K562 (cell line): ENCODE measurements at regions of chr1 and their contacts with region 1.

Region 1: GRCh38 chr1:41432481-41433280 is 51.8 kb downstream of the EDN2 start:
- DNase-seq: peak; percentile 90 to 97 (median 94)
- ATAC-seq: peak; percentile 100
- H3K4me3 ChIP-seq: no peak overlapping the region
- H3K27ac ChIP-seq: no peak overlapping the region
- H3K4me1 ChIP-seq: peaks cover 7 to 15% of the 10 kb centered on the region in 2 experiments; a peak in 3 of 5 replicates
- H3K27me3 ChIP-seq: peaks cover 16 to 38% of the 10 kb centered on the region in 2 experiments
- CTCF ChIP-seq: peak; percentile 97 to 99 (median 98)
- EP300 ChIP-seq: no peak
- POLR2A ChIP-seq: no peak
- RAD21 ChIP-seq: peak; percentile 94 to 99

Region 2: DNA sequence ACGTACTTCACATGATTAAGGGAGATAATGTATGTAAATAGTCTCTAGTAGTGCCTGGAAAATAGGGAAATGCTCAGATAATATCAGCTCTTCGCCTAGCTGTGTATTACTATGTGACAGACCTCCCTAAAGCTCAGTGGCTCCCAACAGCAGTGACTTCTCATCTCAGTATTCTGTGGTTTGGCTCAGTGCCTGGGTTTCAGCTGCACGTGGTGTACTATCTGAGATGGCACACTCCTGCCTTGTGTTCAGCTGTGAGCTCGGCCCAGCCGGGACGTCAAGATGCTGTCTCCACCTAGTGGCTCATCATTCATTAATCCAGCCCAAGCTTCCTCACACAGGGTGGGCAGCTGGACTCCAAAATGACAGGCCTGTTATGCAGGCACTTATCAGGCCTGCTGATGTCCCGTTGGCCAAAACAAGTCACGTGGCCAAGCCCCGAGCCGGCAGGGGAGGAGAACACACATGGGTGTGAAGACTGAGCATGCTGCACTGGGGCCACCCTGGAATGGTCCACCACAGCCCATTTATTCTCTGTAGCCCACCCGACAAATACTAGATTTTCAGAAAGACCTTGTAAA is 429.0 kb before region 1 on chr1:
- CTCF ChIA-PET with region 1: no interaction called
- POLR2A ChIA-PET with region 1: no interaction called
- in situ Hi-C with region 1: no loop called
- intact Hi-C with region 1: no loop called
- DNase-seq: peak; percentile 89 to 99 (median 93)
- ATAC-seq: peak; percentile 98
- H3K4me3 ChIP-seq: no peak overlapping the region
- H3K27ac ChIP-seq: no peak overlapping the region
- H3K4me1 ChIP-seq: peaks cover 13 to 17% of the 10 kb centered on the region in 2 experiments; a peak in 4 of 5 replicates
- H3K27me3 ChIP-seq: no peaks in the 10 kb centered on the region; a peak in 1 of 5 replicates
- CTCF ChIP-seq: peak; percentile 79 to 92 (median 88)
- EP300 ChIP-seq: peak; percentile 85
- POLR2A ChIP-seq: no peak
- RAD21 ChIP-seq: peak; percentile 70 to 80

Region 3: GRCh38 chr1:41268154-41268770 is 164.4 kb before region 1 on chr1:
- CTCF ChIA-PET with region 1: interaction called, 25 read pairs
- POLR2A ChIA-PET with region 1: no interaction called
- in situ Hi-C with region 1: loop called (anchors 5 kb)
- intact Hi-C with region 1: loop called (anchors 1 kb)
- DNase-seq: peak; percentile 81 to 90 (median 89)
- ATAC-seq: peak; percentile 92
- H3K4me3 ChIP-seq: no peak overlapping the region
- H3K27ac ChIP-seq: no peak overlapping the region
- H3K4me1 ChIP-seq: no peaks in the 10 kb centered on the region; a peak in 1 of 5 replicates
- H3K27me3 ChIP-seq: peaks cover 20 to 24% of the 10 kb centered on the region in 2 experiments; a peak in 4 of 5 replicates
- CTCF ChIP-seq: peak; percentile 95 to 99 (median 98)
- EP300 ChIP-seq: no peak
- POLR2A ChIP-seq: no peak
- RAD21 ChIP-seq: peak; percentile 93 to 97

Region 4: DNA sequence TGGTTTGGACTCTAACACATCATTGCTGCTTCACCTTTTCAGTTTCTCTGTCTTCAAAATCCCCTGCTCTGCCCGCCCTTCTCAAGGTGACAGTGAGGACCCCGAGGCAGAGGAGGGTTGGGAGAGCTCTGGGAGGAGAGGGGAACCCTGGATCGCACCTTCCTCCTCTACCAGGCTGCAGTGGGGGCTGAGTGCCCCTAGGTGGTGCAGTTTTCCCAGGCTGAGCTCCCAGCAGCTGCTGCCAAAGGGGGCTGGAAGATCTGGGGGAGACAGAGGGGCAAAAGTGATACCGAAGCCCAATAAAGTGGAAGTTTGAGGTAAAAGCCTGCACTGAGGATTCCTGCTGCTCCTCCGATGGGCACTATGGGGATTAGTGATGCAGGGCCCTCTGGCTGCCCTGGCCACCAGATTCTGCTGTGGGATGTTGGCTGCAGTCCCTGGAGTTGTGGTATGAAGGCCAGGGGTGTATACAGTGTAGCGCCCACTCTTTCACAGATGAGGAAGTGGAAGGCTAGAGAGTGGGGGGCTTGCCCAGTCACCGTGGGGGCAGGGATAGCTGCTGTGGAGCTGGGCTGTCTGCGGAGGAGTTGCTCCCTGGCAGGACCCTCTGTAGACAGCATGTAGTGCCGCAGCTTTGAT is 149.9 kb before region 1 on chr1:
- CTCF ChIA-PET with region 1: interaction called, 10 read pairs
- POLR2A ChIA-PET with region 1: no interaction called
- in situ Hi-C with region 1: no loop called
- intact Hi-C with region 1: no loop called
- DNase-seq: peak; percentile 52 to 76 (median 70)
- ATAC-seq: peak; percentile 93
- H3K4me3 ChIP-seq: no peak overlapping the region
- H3K27ac ChIP-seq: no peak overlapping the region
- H3K4me1 ChIP-seq: no peaks in the 10 kb centered on the region
- H3K27me3 ChIP-seq: peaks cover 13 to 52% of the 10 kb centered on the region in 2 experiments; a peak in 4 of 5 replicates
- CTCF ChIP-seq: peak; percentile 82 to 92 (median 84)
- EP300 ChIP-seq: no peak
- POLR2A ChIP-seq: no peak
- RAD21 ChIP-seq: peak; percentile 56 to 82

Region 5: GRCh38 chr1:41313661-41314131 is 119.0 kb before region 1 on chr1:
- CTCF ChIA-PET with region 1: interaction called, 8 read pairs
- POLR2A ChIA-PET with region 1: no interaction called
- in situ Hi-C with region 1: loop called (anchors 5 kb)
- intact Hi-C with region 1: loop called (anchors 2 kb)
- DNase-seq: peak; percentile 59 to 73 (median 68)
- ATAC-seq: peak; percentile 93
- H3K4me3 ChIP-seq: no peak overlapping the region
- H3K27ac ChIP-seq: no peak overlapping the region
- H3K4me1 ChIP-seq: no peaks in the 10 kb centered on the region
- H3K27me3 ChIP-seq: peaks cover 12 to 38% of the 10 kb centered on the region in 2 experiments; a peak in 4 of 5 replicates
- CTCF ChIP-seq: peak; percentile 66 to 88 (median 84)
- EP300 ChIP-seq: no peak
- POLR2A ChIP-seq: no peak
- RAD21 ChIP-seq: peak; percentile 19 to 64; a peak in 2 of 4 replicates

Region 6: GRCh38 chr1:41322835-41323627 is 109.7 kb before region 1 on chr1:
- CTCF ChIA-PET with region 1: interaction called, 14 read pairs
- POLR2A ChIA-PET with region 1: interaction called, 4 read pairs
- in situ Hi-C with region 1: loop called (anchors 5 kb)
- intact Hi-C with region 1: loop called (anchors 2 kb)
- DNase-seq: peak; percentile 60 to 75 (median 62)
- ATAC-seq: peak; percentile 95
- H3K4me3 ChIP-seq: no peak overlapping the region
- H3K27ac ChIP-seq: no peak overlapping the region
- H3K4me1 ChIP-seq: no peaks in the 10 kb centered on the region
- H3K27me3 ChIP-seq: peaks cover 15 to 48% of the 10 kb centered on the region in 2 experiments
- CTCF ChIP-seq: peak; percentile 85 to 90 (median 87)
- EP300 ChIP-seq: no peak
- POLR2A ChIP-seq: no peak
- RAD21 ChIP-seq: peak; percentile 94 to 96

Region 7: DNA sequence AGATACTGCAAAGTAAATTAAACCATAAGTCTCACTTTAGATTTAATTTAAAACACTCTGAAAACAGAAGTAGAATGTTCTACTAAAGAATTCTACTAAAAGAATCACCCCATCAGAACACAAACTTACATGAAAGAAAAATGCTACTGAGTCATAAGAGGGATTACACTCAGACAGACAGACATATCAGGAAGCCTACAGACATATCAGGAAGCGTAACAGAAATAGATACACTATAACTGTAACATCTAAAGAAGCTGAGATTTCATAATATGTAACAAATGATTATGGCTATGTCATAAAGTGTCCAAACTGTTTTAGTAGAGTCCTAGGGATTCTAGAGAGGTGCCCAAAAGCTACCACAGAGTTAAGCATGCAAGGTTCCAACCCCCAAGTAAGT is 878.5 kb after region 1 on chr1:
- CTCF ChIA-PET with region 1: no interaction called
- POLR2A ChIA-PET with region 1: no interaction called
- in situ Hi-C with region 1: no loop called
- intact Hi-C with region 1: no loop called
- DNase-seq: no peak
- ATAC-seq: no peak
- H3K4me3 ChIP-seq: no peak overlapping the region
- H3K27ac ChIP-seq: no peak overlapping the region
- H3K4me1 ChIP-seq: 0 out of 5 replicates have a peak, but pooled peaks cover 0 to 3% of the 10 kb centered on the region in 2 experiments
- H3K27me3 ChIP-seq: no peaks in the 10 kb centered on the region
- CTCF ChIP-seq: no peak
- EP300 ChIP-seq: no peak
- POLR2A ChIP-seq: no peak
- RAD21 ChIP-seq: no peak

Region 8: GRCh38 chr1:42877380-42877779 is 1444.7 kb after region 1 on chr1:
- CTCF ChIA-PET with region 1: no interaction called
- POLR2A ChIA-PET with region 1: no interaction called
- in situ Hi-C with region 1: no loop called
- intact Hi-C with region 1: no loop called
- DNase-seq: no peak
- ATAC-seq: no peak
- H3K4me3 ChIP-seq: no peak overlapping the region
- H3K27ac ChIP-seq: no peak overlapping the region
- H3K4me1 ChIP-seq: no peaks in the 10 kb centered on the region
- H3K27me3 ChIP-seq: peaks cover 0 to 16% of the 10 kb centered on the region in 2 experiments; a peak in 2 of 5 replicates
- CTCF ChIP-seq: no peak
- EP300 ChIP-seq: no peak
- POLR2A ChIP-seq: no peak
- RAD21 ChIP-seq: no peak